Naive thymus-derived CD4-positive, alpha-beta T cell (primary cell): ENCODE measurements at regions of chr12 and their contacts with region 1.

Region 1: GRCh38 chr12:132887513-132888351 is at the start of gene CHFR:
- DNase-seq: peak; percentile 89 to 95 (median 93)
- ATAC-seq: peak; percentile 99
- H3K4me3 ChIP-seq: peak within 1 kb of the TSS; percentile 100
- H3K4me3 Mint-ChIP-seq: peak within 1 kb of the TSS; percentile 93 to 100 (median 97)
- H3K27ac ChIP-seq: peak within 1 kb of the TSS; percentile 94
- H3K27ac Mint-ChIP-seq: peak within 1 kb of the TSS; percentile 98 to 100 (median 99)
- H3K4me1 ChIP-seq: peaks cover 9% of the 10 kb centered on the region in 2 donors
- H3K4me1 Mint-ChIP-seq: peaks cover 14 to 50% (median 32%) of the 10 kb centered on the region in 7 donors
- H3K27me3 ChIP-seq: no peaks in the 10 kb centered on the region
- H3K27me3 Mint-ChIP-seq: no peaks in the 10 kb centered on the region
- total RNA-seq, gene CHFR: 66.7 to 97.8 (median 81.7) TPM

Region 2: DNA sequence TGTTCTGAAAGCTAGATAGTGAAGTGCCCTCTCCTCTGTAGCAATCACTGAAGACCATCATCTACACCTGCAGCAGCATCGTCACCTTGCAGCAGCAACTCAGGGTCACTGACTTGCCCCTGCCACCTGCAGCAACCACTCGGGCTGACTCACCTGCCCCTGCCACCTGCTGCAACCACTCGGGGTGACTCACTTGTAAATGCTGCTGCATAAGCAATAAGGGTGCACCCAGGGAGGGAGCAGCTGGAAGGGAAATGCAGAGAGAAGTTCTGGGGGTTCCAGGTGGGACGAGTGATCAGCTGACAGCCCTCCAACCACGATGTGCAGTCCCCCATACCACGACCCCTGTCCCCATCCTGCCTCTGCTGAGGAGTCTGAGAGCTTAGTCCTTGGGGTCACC is 1533.9 kb before region 1 on chr12:
- CTCF ChIA-PET with region 1: no interaction called
- POLR2A ChIA-PET with region 1: no interaction called
- intact Hi-C with region 1: no loop called
- DNase-seq: no peak
- ATAC-seq: no peak
- H3K4me3 ChIP-seq: no peak overlapping the region
- H3K4me3 Mint-ChIP-seq: no peak overlapping the region
- H3K27ac ChIP-seq: no peak overlapping the region
- H3K27ac Mint-ChIP-seq: no peak overlapping the region
- H3K4me1 ChIP-seq: no peaks in the 10 kb centered on the region
- H3K4me1 Mint-ChIP-seq: peaks cover 0 to 7% (median 0%) of the 10 kb centered on the region in 7 donors
- H3K27me3 ChIP-seq: no peaks in the 10 kb centered on the region
- H3K27me3 Mint-ChIP-seq: peaks cover 2 to 37% (median 23%) of the 10 kb centered on the region in 5 donors

Region 3: GRCh38 chr12:132544083-132544402 is 343.7 kb before region 1 on chr12:
- CTCF ChIA-PET with region 1: no interaction called
- POLR2A ChIA-PET with region 1: no interaction called
- intact Hi-C with region 1: no loop called
- DNase-seq: no peak
- ATAC-seq: no peak
- H3K4me3 ChIP-seq: no peak overlapping the region
- H3K4me3 Mint-ChIP-seq: peak overlapping the region in 1 of 10 donors; percentile 1
- H3K27ac ChIP-seq: no peak overlapping the region
- H3K27ac Mint-ChIP-seq: no peak overlapping the region
- H3K4me1 ChIP-seq: peaks cover 0 to 3% of the 10 kb centered on the region in 2 donors
- H3K4me1 Mint-ChIP-seq: peaks cover 3 to 8% (median 7%) of the 10 kb centered on the region in 7 donors
- H3K27me3 ChIP-seq: no peaks in the 10 kb centered on the region
- H3K27me3 Mint-ChIP-seq: no peaks in the 10 kb centered on the region

Region 4: GRCh38 chr12:132761032-132761920 is 126.5 kb before region 1 on chr12 and contains the start of gene ANKLE2:
- CTCF ChIA-PET with region 1: no interaction called
- POLR2A ChIA-PET with region 1: interaction called, 6 read pairs
- intact Hi-C with region 1: loop called (anchors 1 to 5 kb)
- DNase-seq: peak; percentile 35 to 77 (median 63)
- ATAC-seq: peak; percentile 75
- H3K4me3 ChIP-seq: peak within 1 kb of the TSS; percentile 88
- H3K4me3 Mint-ChIP-seq: peak within 1 kb of the TSS; percentile 89 to 97 (median 94)
- H3K27ac ChIP-seq: peak within 1 kb of the TSS; percentile 87
- H3K27ac Mint-ChIP-seq: peak within 1 kb of the TSS; percentile 92 to 97 (median 95)
- H3K4me1 ChIP-seq: peaks cover 9 to 13% of the 10 kb centered on the region in 2 donors
- H3K4me1 Mint-ChIP-seq: peaks cover 25 to 43% (median 26%) of the 10 kb centered on the region in 7 donors
- H3K27me3 ChIP-seq: no peaks in the 10 kb centered on the region
- H3K27me3 Mint-ChIP-seq: no peaks in the 10 kb centered on the region
- total RNA-seq, gene ANKLE2: 69.5 to 95.5 (median 92.2) TPM

Region 5: DNA sequence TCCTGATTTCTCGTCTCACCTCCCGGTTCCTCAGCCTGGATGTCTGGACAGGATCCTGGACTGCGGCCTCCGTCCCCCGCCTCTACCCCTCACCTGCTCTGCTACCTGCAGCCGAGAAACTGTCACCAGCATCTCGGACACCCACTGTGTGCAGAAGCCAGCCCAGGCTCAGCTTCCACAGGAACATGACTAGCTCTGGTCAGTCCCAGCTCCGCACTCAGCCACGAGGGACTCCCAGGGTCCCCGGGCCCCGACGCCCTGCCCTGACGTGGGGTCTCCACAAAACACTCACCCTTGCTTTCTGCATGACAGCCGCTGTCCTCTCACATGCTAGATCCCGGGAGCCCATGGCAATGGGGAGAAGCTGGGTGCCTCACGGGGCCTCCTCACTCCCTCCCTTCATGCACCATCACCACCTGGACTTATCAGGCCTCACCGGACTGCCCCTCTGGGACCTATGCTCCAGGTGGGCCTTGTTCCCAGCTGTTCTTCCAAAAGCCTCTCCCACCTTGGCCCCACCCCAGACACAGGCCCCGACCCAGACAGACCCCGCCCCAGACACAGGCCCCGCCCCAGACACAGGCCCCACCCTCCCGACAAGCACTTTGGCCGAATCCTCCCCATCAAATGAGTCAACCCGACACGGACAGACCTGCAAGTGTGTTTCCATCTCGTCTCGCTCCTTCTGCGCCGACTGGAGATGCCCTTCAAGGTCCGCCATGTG is 99.2 kb before region 1 on chr12:
- CTCF ChIA-PET with region 1: no interaction called
- POLR2A ChIA-PET with region 1: no interaction called
- intact Hi-C with region 1: no loop called
- DNase-seq: no peak
- ATAC-seq: no peak
- H3K4me3 ChIP-seq: no peak overlapping the region
- H3K4me3 Mint-ChIP-seq: no peak overlapping the region
- H3K27ac ChIP-seq: no peak overlapping the region
- H3K27ac Mint-ChIP-seq: peak overlapping the region in 2 of 9 donors; percentile 36 to 84
- H3K4me1 ChIP-seq: no peaks in the 10 kb centered on the region
- H3K4me1 Mint-ChIP-seq: peaks cover 0 to 7% (median 0%) of the 10 kb centered on the region in 7 donors
- H3K27me3 ChIP-seq: no peaks in the 10 kb centered on the region
- H3K27me3 Mint-ChIP-seq: no peaks in the 10 kb centered on the region

Region 6: DNA sequence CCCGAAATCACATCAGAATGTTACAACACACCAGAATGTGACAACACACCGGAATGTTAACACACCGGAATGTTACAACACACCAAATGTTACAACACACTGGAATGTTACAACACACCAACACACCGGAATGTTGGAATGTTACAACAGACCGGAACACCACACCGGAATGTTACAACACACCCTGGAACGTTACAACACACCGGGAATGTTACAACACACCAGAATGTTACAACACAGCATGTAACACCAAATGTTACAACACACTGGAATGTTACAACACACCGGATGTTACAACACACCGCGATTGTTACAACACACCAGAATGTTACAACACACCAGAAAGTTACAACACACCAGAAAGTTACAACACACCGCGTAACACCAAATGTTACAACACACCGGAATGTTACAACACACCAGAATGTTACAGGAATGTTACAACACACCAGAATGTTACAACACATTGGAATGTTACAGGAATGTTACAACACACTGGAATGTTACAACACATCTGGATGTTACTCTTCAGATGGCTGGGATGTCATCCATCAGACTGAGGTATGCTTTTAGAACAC is 21.4 kb before region 1 on chr12:
- CTCF ChIA-PET with region 1: no interaction called
- POLR2A ChIA-PET with region 1: interaction called, 10 read pairs
- intact Hi-C with region 1: loop called in 1 of 2 experiments (anchors 1 kb)
- DNase-seq: no peak
- ATAC-seq: no peak
- H3K4me3 ChIP-seq: no peak overlapping the region
- H3K4me3 Mint-ChIP-seq: peak overlapping the region in 7 of 10 donors; percentile 48 to 85 (median 77)
- H3K27ac ChIP-seq: peak overlapping the region; percentile 71
- H3K27ac Mint-ChIP-seq: peak overlapping the region; percentile 81 to 99 (median 95)
- H3K4me1 ChIP-seq: peaks cover 0 to 25% of the 10 kb centered on the region in 2 donors
- H3K4me1 Mint-ChIP-seq: peaks cover 10 to 39% (median 23%) of the 10 kb centered on the region in 7 donors
- H3K27me3 ChIP-seq: no peaks in the 10 kb centered on the region
- H3K27me3 Mint-ChIP-seq: no peaks in the 10 kb centered on the region

Region 7: GRCh38 chr12:132986001-132986912 is 98.5 kb after region 1 on chr12 and contains the start of gene ZNF26:
- CTCF ChIA-PET with region 1: no interaction called
- POLR2A ChIA-PET with region 1: interaction called, 4 read pairs
- intact Hi-C with region 1: loop called (anchors 1 kb)
- DNase-seq: peak; percentile 66 to 90 (median 86)
- ATAC-seq: peak; percentile 99
- H3K4me3 ChIP-seq: peak within 1 kb of the TSS; percentile 96
- H3K4me3 Mint-ChIP-seq: peak within 1 kb of the TSS; percentile 84 to 98 (median 94)
- H3K27ac ChIP-seq: peak within 1 kb of the TSS; percentile 87
- H3K27ac Mint-ChIP-seq: peak within 1 kb of the TSS; percentile 90 to 98 (median 97)
- H3K4me1 ChIP-seq: peaks cover 11 to 12% of the 10 kb centered on the region in 2 donors
- H3K4me1 Mint-ChIP-seq: peaks cover 23 to 42% (median 39%) of the 10 kb centered on the region in 7 donors
- H3K27me3 ChIP-seq: no peaks in the 10 kb centered on the region
- H3K27me3 Mint-ChIP-seq: peaks cover 0 to 10% (median 4%) of the 10 kb centered on the region in 5 donors
- total RNA-seq, gene ZNF26: 16.0 to 38.8 (median 33.6) TPM

Region 8: DNA sequence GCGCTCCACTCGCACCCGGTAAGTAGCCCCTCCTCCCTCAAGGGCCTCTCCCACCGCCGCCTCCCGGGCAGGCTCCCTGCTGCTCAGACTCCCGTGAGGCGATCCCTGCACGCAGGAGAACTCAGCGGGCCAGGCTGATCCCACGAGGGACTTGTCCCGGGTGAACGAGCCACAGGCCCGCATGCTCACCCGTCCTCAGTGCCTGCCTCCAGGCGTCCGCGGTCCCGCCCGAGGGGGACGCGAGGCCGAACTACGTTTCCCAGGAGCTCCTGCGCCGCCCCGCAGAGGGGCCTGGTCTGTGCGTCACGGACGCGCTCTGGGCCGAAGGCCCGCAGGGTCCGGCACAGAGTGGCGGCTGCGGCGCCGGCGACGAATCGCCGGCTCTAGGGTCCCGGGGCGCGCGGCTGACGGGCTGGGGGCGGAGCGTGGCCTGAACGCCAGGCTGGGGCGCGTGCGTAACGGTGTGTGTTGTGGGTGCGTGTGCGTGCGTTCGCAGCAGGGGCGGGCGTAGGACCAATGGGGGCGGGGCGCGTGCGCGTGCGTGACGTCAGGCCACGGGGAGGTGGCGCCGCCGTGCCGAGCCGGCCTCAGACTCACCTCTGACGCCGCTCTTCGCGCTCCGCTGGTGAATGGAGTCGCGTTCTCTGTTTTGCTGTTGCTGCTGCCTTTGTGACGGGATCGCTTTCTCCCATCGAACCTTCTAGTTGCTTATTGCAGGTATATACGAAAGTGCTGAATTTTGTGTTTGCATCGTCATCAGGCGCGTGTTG is 242.5 kb after region 1 on chr12 and contains the starts of genes ZNF10 and ZNF891:
- CTCF ChIA-PET with region 1: no interaction called
- POLR2A ChIA-PET with region 1: no interaction called
- intact Hi-C with region 1: loop called (anchors 1 kb)
- DNase-seq: peak; percentile 96 to 99 (median 98)
- ATAC-seq: peak; percentile 93
- H3K4me3 ChIP-seq: peak within 1 kb of the TSS; percentile 62
- H3K4me3 Mint-ChIP-seq: peak within 1 kb of the TSS; percentile 90 to 99 (median 94)
- H3K27ac ChIP-seq: peak within 1 kb of the TSS; percentile 98
- H3K27ac Mint-ChIP-seq: peak within 1 kb of the TSS; percentile 97 to 100 (median 99)
- H3K4me1 ChIP-seq: peaks cover 0 to 7% of the 10 kb centered on the region in 2 donors
- H3K4me1 Mint-ChIP-seq: peaks cover 15 to 51% (median 27%) of the 10 kb centered on the region in 7 donors
- H3K27me3 ChIP-seq: no peaks in the 10 kb centered on the region
- H3K27me3 Mint-ChIP-seq: no peaks in the 10 kb centered on the region
- total RNA-seq, gene ZNF10: 5.2 to 35.0 (median 29.2) TPM
- total RNA-seq, gene ZNF891: 2.4 to 7.9 (median 6.6) TPM